ENCODE measurements at regions of chr2 and their contacts with region 1.

Region 1: DNA sequence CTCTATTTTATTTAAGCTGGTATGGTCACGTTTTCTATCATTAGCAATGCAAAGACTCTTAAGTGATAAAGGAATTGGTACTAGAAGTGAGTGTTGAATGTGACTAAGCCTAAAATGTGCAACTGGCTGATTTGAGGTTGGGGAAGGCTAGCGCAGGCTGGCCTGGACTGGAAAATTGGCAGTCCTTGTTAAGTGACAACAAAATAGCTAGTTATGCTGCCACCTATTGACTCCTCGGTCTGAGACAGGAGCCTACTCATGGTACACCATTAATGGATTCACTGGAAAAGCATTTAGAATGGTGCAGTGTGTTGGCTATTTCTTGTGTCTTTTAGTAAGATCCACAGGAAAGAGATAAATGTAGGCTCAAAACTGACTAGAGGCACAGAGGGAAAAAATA is 5.7 kb upstream of the WIPF1 start:
- DNase-seq: peak; percentile 33 to 62
- H3K4me3 ChIP-seq: no peak overlapping the region
- H3K27ac ChIP-seq: no peak overlapping the region
- H3K4me1 ChIP-seq: peaks cover 21 to 25% of the 10 kb centered on the region in 2 donors
- H3K27me3 ChIP-seq: no peaks in the 10 kb centered on the region
- CTCF ChIP-seq: peak in 3 of 6 experiments; percentile 40 to 57 (median 45)
- POLR2A ChIP-seq: no peak

Region 2: DNA sequence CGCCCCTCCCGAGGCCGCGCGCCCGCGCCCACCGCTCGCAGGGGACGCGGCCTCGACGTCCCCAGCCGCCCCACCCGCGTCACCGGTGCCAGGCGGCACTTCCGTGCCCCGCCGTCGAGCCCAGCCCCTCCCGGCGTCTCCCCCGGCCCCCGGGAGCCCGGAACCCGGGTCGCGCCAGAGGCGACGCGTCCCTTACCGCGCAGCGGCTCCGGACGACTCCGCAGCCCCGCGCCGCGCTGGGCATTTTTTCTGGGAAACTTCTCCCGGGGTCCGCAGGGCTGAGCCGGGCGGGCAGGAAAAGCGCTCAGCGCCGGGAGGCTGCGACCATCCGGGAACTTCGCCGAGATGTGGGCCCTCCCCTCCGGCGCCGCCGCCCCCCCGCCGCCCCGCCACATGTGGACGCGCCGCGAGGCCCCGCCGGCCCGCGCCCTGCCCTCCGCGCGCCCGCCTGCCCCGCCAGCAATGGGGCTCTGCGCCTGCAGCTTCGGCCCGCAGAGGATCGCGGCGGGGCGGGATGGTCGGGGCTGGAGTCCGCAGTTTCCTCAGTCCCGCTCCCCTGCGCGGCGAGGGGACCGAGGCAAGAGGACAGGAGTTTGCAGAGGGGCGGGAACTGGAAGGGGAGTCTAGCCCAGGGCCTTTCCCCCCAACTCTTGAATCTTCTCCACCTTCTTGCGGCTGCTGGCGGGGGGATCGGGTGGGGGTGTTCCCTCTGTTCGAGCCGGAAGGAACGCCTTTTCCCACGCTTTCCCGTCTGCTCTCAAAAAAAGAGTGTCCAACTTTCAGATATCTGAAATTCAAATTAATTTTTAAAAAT is 79.5 kb after region 1 on chr2:
- intact Hi-C with region 1: loop called (anchors 10 kb)
- DNase-seq: peak; percentile 67 to 74
- H3K4me3 ChIP-seq: peak overlapping the region; percentile 52 to 89 (median 85)
- H3K27ac ChIP-seq: peak overlapping the region; percentile 48 to 87 (median 86)
- H3K4me1 ChIP-seq: peaks cover 4 to 9% of the 10 kb centered on the region in 2 donors
- H3K27me3 ChIP-seq: no peaks in the 10 kb centered on the region
- CTCF ChIP-seq: no peak
- POLR2A ChIP-seq: peak in 1 of 2 donors; percentile 30